ENCODE measurements at regions of chr5 and their contacts with region 1.

Region 1: DNA sequence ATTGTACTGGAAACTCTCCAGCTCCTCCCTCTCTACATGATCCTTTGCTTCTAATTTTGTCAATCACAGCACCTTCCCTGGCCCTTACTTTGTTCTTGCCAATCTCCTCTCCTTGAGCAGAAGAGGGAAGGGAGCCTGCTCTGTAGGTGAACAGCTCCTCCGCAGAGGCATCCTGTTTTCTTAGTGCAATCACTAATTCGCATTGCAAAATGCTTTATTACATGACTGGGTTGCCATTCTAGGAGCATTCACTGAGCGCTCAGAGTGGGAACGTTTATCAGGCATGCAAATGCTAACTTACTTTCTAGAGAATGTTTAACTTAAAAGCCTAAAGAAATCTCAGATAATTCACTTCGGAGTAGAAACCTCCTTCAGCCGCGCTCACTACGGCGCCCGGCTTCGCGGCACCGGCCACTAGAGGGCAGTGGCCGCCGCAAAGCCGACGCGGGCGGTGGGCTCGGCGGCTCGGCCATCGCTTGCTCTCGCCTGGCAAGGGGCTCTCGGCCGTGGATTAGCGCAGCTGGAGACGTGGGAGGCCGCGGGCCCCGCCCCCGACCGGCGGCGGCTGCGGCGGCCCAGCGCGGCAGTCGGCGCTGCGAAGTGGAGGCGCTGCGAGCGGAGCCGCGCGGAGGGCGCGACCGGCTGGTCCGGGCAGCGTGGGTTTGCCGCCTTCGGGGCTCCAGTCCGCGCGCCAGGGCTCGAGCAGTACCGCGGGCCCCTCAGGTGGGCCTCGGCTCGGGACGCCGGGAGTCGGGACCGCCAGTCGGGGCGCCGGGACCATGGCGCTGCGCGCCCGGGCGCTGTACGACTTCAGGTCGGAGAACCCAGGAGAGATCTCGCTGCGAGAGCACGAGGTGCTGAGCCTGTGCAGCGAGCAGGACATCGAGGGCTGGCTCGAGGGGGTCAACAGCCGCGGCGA is at the start of gene SNX18:
- DNase-seq: peak; percentile 87 to 94 (median 92)
- ATAC-seq: peak; percentile 98
- H3K4me3 ChIP-seq: peak within 1 kb of the TSS; percentile 62
- H3K4me3 Mint-ChIP-seq: peak within 1 kb of the TSS; percentile 62 to 94 (median 91)
- H3K27ac ChIP-seq: peak within 1 kb of the TSS; percentile 83
- H3K27ac Mint-ChIP-seq: peak within 1 kb of the TSS in 8 of 9 donors; percentile 52 to 87 (median 69)
- H3K4me1 ChIP-seq: peaks cover 18 to 37% of the 10 kb centered on the region in 2 donors
- H3K4me1 Mint-ChIP-seq: peaks cover 26 to 48% (median 41%) of the 10 kb centered on the region in 7 donors
- H3K27me3 ChIP-seq: no peaks in the 10 kb centered on the region
- H3K27me3 Mint-ChIP-seq: peaks cover 0 to 29% (median 0%) of the 10 kb centered on the region in 5 donors
- total RNA-seq, gene SNX18: 14.3 to 40.9 (median 28.1) TPM

Region 2: GRCh38 chr5:54021413-54022164 is 495.8 kb before region 1 on chr5:
- CTCF ChIA-PET with region 1: no interaction called
- POLR2A ChIA-PET with region 1: no interaction called
- intact Hi-C with region 1: no loop called
- DNase-seq: no peak
- ATAC-seq: no peak
- H3K4me3 ChIP-seq: no peak overlapping the region
- H3K4me3 Mint-ChIP-seq: peak overlapping the region in 9 of 10 donors; percentile 4 to 90 (median 40)
- H3K27ac ChIP-seq: no peak overlapping the region
- H3K27ac Mint-ChIP-seq: peak overlapping the region in 7 of 9 donors; percentile 20 to 85 (median 29)
- H3K4me1 ChIP-seq: peaks cover 0 to 8% of the 10 kb centered on the region in 2 donors
- H3K4me1 Mint-ChIP-seq: peaks cover 28 to 34% (median 31%) of the 10 kb centered on the region in 7 donors
- H3K27me3 ChIP-seq: no peaks in the 10 kb centered on the region
- H3K27me3 Mint-ChIP-seq: no peaks in the 10 kb centered on the region

Region 3: GRCh38 chr5:54115735-54116403 is 401.6 kb before region 1 on chr5:
- CTCF ChIA-PET with region 1: no interaction called
- POLR2A ChIA-PET with region 1: no interaction called
- intact Hi-C with region 1: no loop called
- DNase-seq: no peak
- ATAC-seq: no peak
- H3K4me3 ChIP-seq: no peak overlapping the region
- H3K4me3 Mint-ChIP-seq: no peak overlapping the region
- H3K27ac ChIP-seq: no peak overlapping the region
- H3K27ac Mint-ChIP-seq: no peak overlapping the region
- H3K4me1 ChIP-seq: no peaks in the 10 kb centered on the region
- H3K4me1 Mint-ChIP-seq: peaks cover 0 to 5% (median 0%) of the 10 kb centered on the region in 7 donors
- H3K27me3 ChIP-seq: no peaks in the 10 kb centered on the region
- H3K27me3 Mint-ChIP-seq: no peaks in the 10 kb centered on the region

Region 4: GRCh38 chr5:54438620-54439394 is 78.6 kb before region 1 on chr5:
- CTCF ChIA-PET with region 1: no interaction called
- POLR2A ChIA-PET with region 1: no interaction called
- intact Hi-C with region 1: no loop called
- DNase-seq: no peak
- ATAC-seq: no peak
- H3K4me3 ChIP-seq: no peak overlapping the region
- H3K4me3 Mint-ChIP-seq: no peak overlapping the region
- H3K27ac ChIP-seq: no peak overlapping the region
- H3K27ac Mint-ChIP-seq: peak overlapping the region in 3 of 9 donors; percentile 21 to 39 (median 23)
- H3K4me1 ChIP-seq: peaks cover 0 to 18% of the 10 kb centered on the region in 2 donors
- H3K4me1 Mint-ChIP-seq: peaks cover 9 to 39% (median 36%) of the 10 kb centered on the region in 7 donors
- H3K27me3 ChIP-seq: no peaks in the 10 kb centered on the region
- H3K27me3 Mint-ChIP-seq: peaks cover 0 to 3% (median 0%) of the 10 kb centered on the region in 5 donors

Region 5: DNA sequence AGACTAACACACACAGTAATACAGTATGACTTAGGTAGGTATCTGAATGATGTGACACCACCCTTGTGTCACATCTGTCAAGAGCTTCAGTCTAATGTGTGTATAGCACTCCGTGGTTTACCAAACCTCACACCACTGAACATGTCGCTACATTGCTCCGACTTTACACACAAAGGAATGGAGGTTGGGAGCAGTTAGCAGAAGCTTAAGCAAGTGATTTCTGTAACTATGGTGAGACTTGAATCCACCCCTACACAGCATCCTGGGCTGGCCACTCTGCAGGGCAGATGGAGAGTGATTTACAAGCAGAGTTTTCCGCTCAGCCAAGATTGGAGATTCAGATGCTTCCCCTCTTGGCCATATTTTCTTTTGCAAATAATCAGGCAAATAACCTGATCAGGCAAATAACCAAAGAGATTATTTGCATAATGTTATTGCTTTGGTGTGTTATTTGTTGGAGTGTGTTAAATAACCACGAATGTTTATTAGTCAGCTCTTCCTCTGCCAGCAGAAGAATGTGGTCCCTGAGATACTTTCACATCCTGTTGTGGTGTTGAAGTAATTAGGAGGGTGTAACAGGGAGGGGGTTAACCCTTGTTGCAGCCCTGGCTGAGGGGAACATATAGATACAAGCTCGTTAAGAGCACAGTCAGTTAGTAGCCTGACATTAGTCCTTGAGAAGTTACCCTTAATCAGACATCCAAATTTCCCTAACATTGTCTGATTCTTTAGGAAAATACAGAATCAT is 92.9 kb after region 1 on chr5:
- CTCF ChIA-PET with region 1: no interaction called
- POLR2A ChIA-PET with region 1: no interaction called
- intact Hi-C with region 1: loop called in 1 of 2 experiments (anchors 1 kb)
- DNase-seq: peak in 6 of 9 donors; percentile 8 to 36 (median 22)
- ATAC-seq: peak; percentile 89
- H3K4me3 ChIP-seq: peak overlapping the region; percentile 23
- H3K4me3 Mint-ChIP-seq: peak overlapping the region in 9 of 10 donors; percentile 14 to 75 (median 52)
- H3K27ac ChIP-seq: no peak overlapping the region
- H3K27ac Mint-ChIP-seq: peak overlapping the region in 8 of 9 donors; percentile 4 to 88 (median 50)
- H3K4me1 ChIP-seq: peaks cover 14 to 32% of the 10 kb centered on the region in 2 donors
- H3K4me1 Mint-ChIP-seq: peaks cover 19 to 32% (median 23%) of the 10 kb centered on the region in 7 donors
- H3K27me3 ChIP-seq: no peaks in the 10 kb centered on the region
- H3K27me3 Mint-ChIP-seq: peaks cover 0 to 8% (median 0%) of the 10 kb centered on the region in 5 donors

Region 6: GRCh38 chr5:54769071-54769470 is 251.6 kb after region 1 on chr5:
- CTCF ChIA-PET with region 1: interaction called, 4 read pairs
- POLR2A ChIA-PET with region 1: no interaction called
- intact Hi-C with region 1: loop called in 1 of 2 experiments (anchors 1 kb)
- DNase-seq: no peak
- ATAC-seq: no peak
- H3K4me3 ChIP-seq: no peak overlapping the region
- H3K4me3 Mint-ChIP-seq: no peak overlapping the region
- H3K27ac ChIP-seq: no peak overlapping the region
- H3K27ac Mint-ChIP-seq: no peak overlapping the region
- H3K4me1 ChIP-seq: no peaks in the 10 kb centered on the region
- H3K4me1 Mint-ChIP-seq: peaks cover 0 to 3% (median 0%) of the 10 kb centered on the region in 7 donors
- H3K27me3 ChIP-seq: no peaks in the 10 kb centered on the region
- H3K27me3 Mint-ChIP-seq: peaks cover 0 to 43% (median 0%) of the 10 kb centered on the region in 5 donors

Region 7: GRCh38 chr5:54844905-54845566 is 327.6 kb after region 1 on chr5:
- CTCF ChIA-PET with region 1: interaction called, 103 read pairs
- POLR2A ChIA-PET with region 1: interaction called, 54 read pairs
- intact Hi-C with region 1: loop called (anchors 1 kb)
- DNase-seq: peak in 6 of 9 donors; percentile 38 to 67 (median 60)
- ATAC-seq: peak; percentile 34
- H3K4me3 ChIP-seq: no peak overlapping the region
- H3K4me3 Mint-ChIP-seq: peak overlapping the region in 7 of 10 donors; percentile 2 to 68 (median 52)
- H3K27ac ChIP-seq: no peak overlapping the region
- H3K27ac Mint-ChIP-seq: peak overlapping the region in 6 of 9 donors; percentile 45 to 63 (median 56)
- H3K4me1 ChIP-seq: no peaks in the 10 kb centered on the region
- H3K4me1 Mint-ChIP-seq: peaks cover 0 to 21% (median 5%) of the 10 kb centered on the region in 7 donors
- H3K27me3 ChIP-seq: no peaks in the 10 kb centered on the region
- H3K27me3 Mint-ChIP-seq: peaks cover 8 to 18% (median 12%) of the 10 kb centered on the region in 5 donors

Region 8: GRCh38 chr5:54895816-54896341 is 378.4 kb after region 1 on chr5:
- CTCF ChIA-PET with region 1: interaction called, 6 read pairs
- POLR2A ChIA-PET with region 1: no interaction called
- intact Hi-C with region 1: loop called in 1 of 2 experiments (anchors 2 kb)
- DNase-seq: no peak
- ATAC-seq: peak; percentile 57
- H3K4me3 ChIP-seq: no peak overlapping the region
- H3K4me3 Mint-ChIP-seq: peak overlapping the region in 8 of 10 donors; percentile 20 to 77 (median 66)
- H3K27ac ChIP-seq: no peak overlapping the region
- H3K27ac Mint-ChIP-seq: peak overlapping the region in 4 of 9 donors; percentile 2 to 52 (median 38)
- H3K4me1 ChIP-seq: no peaks in the 10 kb centered on the region
- H3K4me1 Mint-ChIP-seq: peaks cover 1 to 6% (median 5%) of the 10 kb centered on the region in 7 donors
- H3K27me3 ChIP-seq: no peaks in the 10 kb centered on the region
- H3K27me3 Mint-ChIP-seq: peaks cover 17 to 81% (median 27%) of the 10 kb centered on the region in 5 donors

Region 9: DNA sequence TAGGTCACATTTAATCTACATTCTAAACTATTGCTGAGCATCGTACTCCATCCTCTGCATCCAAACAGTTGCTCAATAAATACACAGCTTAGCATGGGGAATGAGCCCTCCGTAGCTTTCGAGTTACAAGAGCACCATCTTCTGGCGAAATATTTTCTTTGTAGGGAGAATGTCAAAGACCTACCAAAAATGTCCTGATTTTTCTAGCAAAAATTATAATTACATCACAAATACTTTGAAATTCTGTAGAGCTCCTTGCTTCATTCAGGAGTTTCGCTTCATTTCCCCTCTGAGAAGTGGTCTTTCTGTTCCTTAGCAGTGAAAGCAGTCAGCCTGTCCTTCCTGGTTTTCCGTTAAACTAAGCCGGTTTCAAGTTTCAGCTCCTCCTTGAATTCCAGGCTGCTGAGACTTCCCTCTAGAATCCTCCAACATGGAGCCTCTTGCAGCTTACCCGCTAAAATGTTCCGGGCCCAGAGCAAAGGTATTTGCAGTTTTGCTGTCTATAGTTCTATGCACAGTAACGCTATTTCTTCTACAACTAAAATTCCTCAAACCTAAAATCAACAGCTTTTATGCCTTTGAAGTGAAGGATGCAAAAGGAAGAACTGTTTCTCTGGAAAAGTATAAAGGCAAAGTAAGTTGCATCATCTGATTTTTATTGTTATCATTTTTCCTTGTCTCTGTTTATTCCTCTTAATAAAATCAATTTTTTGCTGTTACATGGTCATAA is 642.5 kb after region 1 on chr5 and contains the start of gene GPX8:
- CTCF ChIA-PET with region 1: interaction called, 6 read pairs
- POLR2A ChIA-PET with region 1: no interaction called
- intact Hi-C with region 1: loop called (anchors 1 to 2 kb)
- DNase-seq: peak in 7 of 9 donors; percentile 27 to 65 (median 54)
- ATAC-seq: peak; percentile 75
- H3K4me3 ChIP-seq: no peak within 1 kb of the TSS
- H3K4me3 Mint-ChIP-seq: no peak within 1 kb of the TSS
- H3K27ac ChIP-seq: no peak within 1 kb of the TSS
- H3K27ac Mint-ChIP-seq: no peak within 1 kb of the TSS
- H3K4me1 ChIP-seq: no peaks in the 10 kb centered on the region
- H3K4me1 Mint-ChIP-seq: peaks cover 0 to 9% (median 0%) of the 10 kb centered on the region in 7 donors
- H3K27me3 ChIP-seq: no peaks in the 10 kb centered on the region
- H3K27me3 Mint-ChIP-seq: peaks cover 6 to 75% (median 29%) of the 10 kb centered on the region in 5 donors
- total RNA-seq, gene GPX8: not detected

Region 10: GRCh38 chr5:55691265-55692105 is 1174.1 kb after region 1 on chr5:
- CTCF ChIA-PET with region 1: no interaction called
- POLR2A ChIA-PET with region 1: no interaction called
- intact Hi-C with region 1: no loop called
- DNase-seq: peak in 6 of 9 donors; percentile 35 to 59 (median 48)
- ATAC-seq: peak; percentile 65
- H3K4me3 ChIP-seq: no peak overlapping the region
- H3K4me3 Mint-ChIP-seq: no peak overlapping the region
- H3K27ac ChIP-seq: no peak overlapping the region
- H3K27ac Mint-ChIP-seq: no peak overlapping the region
- H3K4me1 ChIP-seq: peaks cover 0 to 3% of the 10 kb centered on the region in 2 donors
- H3K4me1 Mint-ChIP-seq: peaks cover 0 to 22% (median 6%) of the 10 kb centered on the region in 7 donors
- H3K27me3 ChIP-seq: no peaks in the 10 kb centered on the region
- H3K27me3 Mint-ChIP-seq: no peaks in the 10 kb centered on the region

Region 11: GRCh38 chr5:55711968-55712859 is 1194.8 kb after region 1 on chr5 and contains the start of gene SLC38A9:
- CTCF ChIA-PET with region 1: no interaction called
- POLR2A ChIA-PET with region 1: no interaction called
- intact Hi-C with region 1: loop called in 1 of 2 experiments (anchors 5 kb)
- DNase-seq: peak; percentile 82 to 91 (median 90)
- ATAC-seq: peak; percentile 100
- H3K4me3 ChIP-seq: peak within 1 kb of the TSS; percentile 87
- H3K4me3 Mint-ChIP-seq: peak within 1 kb of the TSS; percentile 94 to 99 (median 98)
- H3K27ac ChIP-seq: peak within 1 kb of the TSS; percentile 72
- H3K27ac Mint-ChIP-seq: peak within 1 kb of the TSS; percentile 76 to 97 (median 91)
- H3K4me1 ChIP-seq: peaks cover 12 to 16% of the 10 kb centered on the region in 2 donors
- H3K4me1 Mint-ChIP-seq: peaks cover 20 to 40% (median 29%) of the 10 kb centered on the region in 7 donors
- H3K27me3 ChIP-seq: no peaks in the 10 kb centered on the region
- H3K27me3 Mint-ChIP-seq: peaks cover 0 to 3% (median 0%) of the 10 kb centered on the region in 5 donors
- total RNA-seq, gene SLC38A9: 17.7 to 32.6 (median 30.4) TPM